AG04449 (cell line): ENCODE measurements at regions of chr6 and their contacts with region 1.

Region 1: DNA sequence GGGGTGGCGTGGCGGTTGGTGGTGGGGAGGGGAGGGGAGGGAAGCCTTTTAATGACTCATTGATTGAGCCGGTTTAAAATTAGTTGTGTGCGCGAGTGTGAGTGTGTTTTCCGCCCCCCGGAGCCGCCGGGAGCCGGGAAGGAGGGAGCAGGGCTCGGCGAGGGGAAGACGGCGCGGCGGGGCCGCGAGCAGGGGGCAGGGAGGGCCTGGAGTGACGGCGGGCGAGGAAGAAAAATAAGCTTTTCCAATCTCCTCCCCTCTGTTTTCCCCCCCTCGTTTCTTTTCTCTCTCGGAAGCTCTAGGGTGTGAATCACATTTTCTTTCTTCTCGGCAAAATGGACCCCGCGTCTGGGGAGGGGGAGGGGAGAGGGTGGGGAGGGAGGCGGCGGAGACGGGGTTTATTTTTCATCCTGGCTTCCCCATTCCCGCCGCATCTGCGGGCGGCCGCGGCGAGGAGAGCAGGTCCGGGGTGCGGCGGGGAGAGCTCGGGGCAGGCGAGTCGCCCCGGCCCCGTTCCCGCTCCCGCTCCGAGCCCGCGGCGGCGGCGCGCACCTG is 847 bp downstream of the BICRAL start:
- DNase-seq: peak; percentile 58
- H3K4me3 ChIP-seq: peak overlapping the region; percentile 76
- CTCF ChIP-seq: no peak

Region 2: GRCh38 chr6:42745707-42746462 is 36.8 kb before region 1 on chr6 and contains the start of gene TBCC:
- CTCF ChIA-PET with region 1: no interaction called
- POLR2A ChIA-PET with region 1: interaction called, 26 read pairs
- DNase-seq: peak; percentile 95
- H3K4me3 ChIP-seq: peak within 1 kb of the TSS; percentile 99
- CTCF ChIP-seq: no peak

Region 3: DNA sequence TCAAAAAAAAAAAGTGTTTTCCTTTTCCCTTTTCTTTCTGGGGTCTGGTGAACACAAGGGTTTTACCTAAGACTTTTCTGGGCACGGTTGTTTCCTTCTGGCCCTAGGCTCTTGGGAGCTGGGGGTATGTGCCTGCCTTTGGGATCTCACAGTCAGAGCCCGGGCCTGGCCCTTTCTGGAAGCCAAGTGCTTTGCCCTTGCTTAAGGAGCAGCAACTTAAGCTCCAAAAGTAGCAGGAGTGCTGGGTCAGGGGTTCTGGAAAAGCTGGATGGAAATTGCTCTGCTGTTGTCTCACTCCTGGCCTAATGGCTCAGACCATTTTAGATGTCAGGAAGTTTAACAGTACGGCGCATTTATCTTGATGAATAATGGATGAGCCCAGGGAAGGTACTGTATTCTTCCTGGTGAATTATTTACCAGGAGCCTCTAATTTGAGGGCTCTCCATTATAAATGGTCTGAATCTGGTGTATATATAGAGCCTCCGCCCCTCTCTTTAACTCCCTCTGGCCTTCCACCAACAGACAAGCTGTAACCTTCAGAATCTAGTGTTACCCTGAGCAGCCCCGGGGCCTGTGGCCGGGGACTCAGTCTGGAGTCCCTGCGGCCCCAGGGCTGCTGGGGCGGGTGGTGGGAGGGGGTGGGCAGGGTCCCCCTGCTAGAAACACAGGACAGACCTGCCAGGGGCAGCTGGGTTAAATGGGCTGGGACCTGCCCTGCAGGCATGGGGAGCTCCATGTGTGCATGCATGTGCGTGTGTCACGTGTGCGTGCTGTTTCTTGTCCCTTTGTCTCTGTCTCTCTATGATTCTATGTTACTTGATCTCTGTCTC is 330.9 kb after region 1 on chr6:
- CTCF ChIA-PET with region 1: no interaction called
- POLR2A ChIA-PET with region 1: no interaction called
- DNase-seq: no peak
- H3K4me3 ChIP-seq: no peak overlapping the region
- CTCF ChIP-seq: no peak